ENCODE measurements at regions of chr14 and their contacts with region 1.

Region 1: DNA sequence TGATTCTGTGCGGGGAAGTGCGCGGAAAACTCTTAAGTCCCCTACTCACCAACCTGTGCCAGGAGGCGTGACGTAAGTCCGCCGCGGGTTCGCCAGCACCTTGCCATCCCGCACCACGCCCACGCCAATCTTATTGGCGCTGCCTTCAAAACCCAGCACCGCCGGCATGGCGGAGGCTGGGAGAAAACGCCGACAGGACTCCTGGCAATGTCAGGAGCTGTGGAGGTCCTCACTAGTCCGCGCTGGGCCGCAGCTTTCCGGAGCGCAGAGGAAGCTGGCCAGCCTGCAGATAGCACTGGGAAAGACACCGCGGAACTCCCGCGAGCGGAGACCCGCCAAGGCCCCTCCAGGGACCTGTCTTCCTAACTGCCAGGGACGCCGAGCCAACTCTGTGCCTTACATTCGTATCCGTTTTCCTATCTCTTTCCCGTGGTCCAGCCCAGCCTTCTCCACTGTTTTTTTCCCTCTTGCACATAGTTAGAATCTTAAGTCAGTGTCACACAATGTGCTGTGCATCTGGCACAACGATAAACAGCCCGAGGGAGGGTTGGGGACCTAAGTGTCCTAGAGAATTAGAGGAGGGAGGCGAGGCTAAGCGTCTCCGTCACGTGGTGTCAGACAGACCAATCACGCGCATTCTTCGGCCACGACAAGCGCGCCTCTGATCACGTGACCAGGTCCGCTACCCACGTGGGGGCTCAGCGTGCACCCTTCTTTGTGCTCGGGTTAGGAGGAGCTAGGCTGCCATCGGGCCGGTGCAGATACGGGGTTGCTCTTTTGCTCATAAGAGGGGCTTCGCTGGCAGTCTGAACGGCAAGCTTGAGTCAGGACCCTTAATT is at the starts of genes APEX1 and OSGEP:
- H3K4me3 Mint-ChIP-seq: no peak within 1 kb of the TSS
- H3K27ac Mint-ChIP-seq: no peak within 1 kb of the TSS
- H3K4me1 Mint-ChIP-seq: peaks cover 18% of the 10 kb centered on the region
- H3K27me3 Mint-ChIP-seq: no peaks in the 10 kb centered on the region

Region 2: DNA sequence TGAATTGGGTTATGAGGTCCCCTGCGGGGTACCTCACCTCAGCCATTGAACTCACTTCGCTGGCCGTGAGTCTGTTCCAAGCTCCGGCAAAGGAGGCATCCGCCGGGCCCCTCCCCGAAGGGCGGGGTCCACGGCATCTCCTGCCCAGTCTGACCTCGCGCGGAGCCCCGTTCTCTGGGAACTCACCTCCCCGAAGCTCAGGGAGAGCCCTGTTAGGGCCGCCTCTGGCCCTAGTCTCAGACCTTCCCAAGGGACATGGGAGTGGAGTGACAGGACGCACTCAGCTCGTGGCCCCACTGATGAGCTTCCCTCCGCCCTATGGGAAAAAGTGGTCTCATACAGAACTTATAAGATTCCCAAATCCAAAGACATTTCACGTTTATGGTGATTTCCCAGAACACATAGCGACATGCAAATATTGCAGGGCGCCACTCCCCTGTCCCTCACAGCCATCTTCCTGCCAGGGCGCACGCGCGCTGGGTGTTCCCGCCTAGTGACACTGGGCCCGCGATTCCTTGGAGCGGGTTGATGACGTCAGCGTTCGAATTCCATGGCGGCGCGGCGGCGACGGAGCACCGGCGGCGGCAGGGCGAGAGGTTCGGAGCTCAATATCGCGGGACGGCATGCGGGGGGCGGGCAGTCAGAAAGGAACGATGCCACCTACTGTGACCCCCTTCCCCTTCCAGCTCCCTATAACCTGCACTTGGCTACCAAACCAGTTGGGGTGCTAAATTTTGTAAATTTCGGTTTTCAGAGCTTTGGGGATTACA is 111.5 kb before region 1 on chr14 and contains the start of gene PARP2:
- intact Hi-C with region 1: loop called (anchors 2 kb)
- H3K4me3 Mint-ChIP-seq: peak within 1 kb of the TSS; percentile 82
- H3K27ac Mint-ChIP-seq: peak within 1 kb of the TSS; percentile 92
- H3K4me1 Mint-ChIP-seq: peaks cover 7% of the 10 kb centered on the region
- H3K27me3 Mint-ChIP-seq: no peaks in the 10 kb centered on the region

Region 3: DNA sequence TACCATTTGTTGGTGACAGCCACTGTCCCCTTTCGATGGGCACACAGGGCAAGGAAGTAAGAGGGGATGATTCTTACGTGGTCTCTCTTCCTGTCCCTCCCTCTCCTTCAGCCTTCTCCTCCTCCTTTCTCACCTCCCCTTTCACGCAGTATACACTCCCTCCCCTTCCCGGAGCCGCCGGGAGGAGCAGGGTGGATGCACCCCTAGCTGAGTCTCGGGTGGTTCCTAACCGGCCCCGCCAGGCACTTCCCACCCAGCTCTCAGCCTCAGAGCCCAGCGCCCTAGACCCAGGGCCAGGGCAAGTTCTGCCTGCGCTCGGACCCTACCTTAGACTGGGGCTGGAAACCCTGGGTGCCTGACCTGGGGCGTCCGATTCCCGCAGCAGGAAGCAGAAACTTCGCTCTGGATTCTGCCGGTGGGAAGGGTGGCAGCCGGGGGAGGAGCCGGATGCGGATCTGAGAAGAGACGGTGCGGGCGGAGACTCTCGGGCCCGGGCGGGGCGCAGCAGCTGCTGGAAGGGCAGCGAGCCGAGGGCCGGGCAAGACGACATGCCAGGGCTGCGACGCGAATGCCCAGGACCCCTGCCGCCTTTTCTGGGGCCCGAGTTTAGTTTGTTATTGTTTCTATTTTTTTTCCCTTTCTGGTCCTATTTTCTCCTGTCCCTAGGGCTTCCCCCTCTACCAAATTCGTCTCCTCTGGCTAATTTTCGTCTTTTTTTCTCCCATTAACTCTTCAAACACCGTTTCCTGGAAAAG is 41.5 kb before region 1 on chr14 and contains the start of gene TEP1:
- intact Hi-C with region 1: loop called (anchors 2 kb)
- H3K4me3 Mint-ChIP-seq: peak within 1 kb of the TSS; percentile 95
- H3K27ac Mint-ChIP-seq: peak within 1 kb of the TSS; percentile 92
- H3K4me1 Mint-ChIP-seq: peaks cover 44% of the 10 kb centered on the region
- H3K27me3 Mint-ChIP-seq: no peaks in the 10 kb centered on the region

Region 4: GRCh38 chr14:20469242-20469889 is 14.6 kb after region 1 on chr14 and contains the start of gene PNP:
- intact Hi-C with region 1: loop called (anchors 2 kb)
- H3K4me3 Mint-ChIP-seq: peak within 1 kb of the TSS; percentile 92
- H3K27ac Mint-ChIP-seq: peak within 1 kb of the TSS; percentile 91
- H3K4me1 Mint-ChIP-seq: peaks cover 48% of the 10 kb centered on the region
- H3K27me3 Mint-ChIP-seq: no peaks in the 10 kb centered on the region

Region 5: GRCh38 chr14:20644520-20644919 is 189.8 kb after region 1 on chr14:
- intact Hi-C with region 1: no loop called
- H3K4me3 Mint-ChIP-seq: no peak overlapping the region
- H3K27ac Mint-ChIP-seq: no peak overlapping the region
- H3K4me1 Mint-ChIP-seq: no peaks in the 10 kb centered on the region
- H3K27me3 Mint-ChIP-seq: peaks cover 48% of the 10 kb centered on the region